Activated naive CD4-positive, alpha-beta T cell treated with anti-CD3 and anti-CD28 coated beads, Interleukin-2, amount 10 ng/mL, durations not matched to agents 7 days and 5 days (primary cell): ENCODE measurements at regions of chr16 and their contacts with region 1.

Region 1: DNA sequence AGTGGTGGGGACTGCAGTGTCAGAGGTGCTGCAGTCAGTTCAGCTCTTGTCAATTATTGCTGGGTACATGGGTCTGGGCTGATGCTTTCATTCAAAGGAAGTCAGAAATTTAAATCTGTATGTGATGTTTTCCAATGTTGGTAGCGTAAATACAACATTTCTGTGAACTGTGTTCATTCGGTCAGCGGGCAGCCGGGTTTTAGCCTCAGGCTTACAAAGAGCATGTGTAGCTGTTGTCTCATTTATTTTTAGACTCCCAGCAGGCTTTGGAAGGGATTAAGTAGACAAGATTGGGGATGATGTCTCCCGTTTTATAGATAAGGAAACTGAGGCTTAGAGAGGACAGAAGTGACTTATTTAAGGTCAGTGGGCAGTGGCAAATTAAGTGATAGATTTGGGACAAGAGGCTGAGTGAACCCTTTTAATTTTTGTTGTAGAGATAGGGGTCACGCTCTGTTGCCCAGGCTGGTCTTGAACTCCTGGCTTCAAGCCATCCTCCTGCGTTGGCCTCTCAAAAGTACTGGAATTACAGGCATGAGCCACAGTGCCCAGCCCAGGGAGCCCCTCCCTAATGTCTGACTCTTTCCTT is 8.1 kb downstream of the AQP8 start:
- DNase-seq: no peak
- H3K4me3 Mint-ChIP-seq: no peak overlapping the region
- H3K27ac Mint-ChIP-seq: no peak overlapping the region
- H3K4me1 Mint-ChIP-seq: no peaks in the 10 kb centered on the region
- H3K27me3 Mint-ChIP-seq: no peaks in the 10 kb centered on the region

Region 2: GRCh38 chr16:24906199-24907020 is 318.4 kb before region 1 on chr16:
- CTCF ChIA-PET with region 1: interaction called, 12 read pairs
- DNase-seq: no peak
- H3K4me3 Mint-ChIP-seq: no peak overlapping the region
- H3K27ac Mint-ChIP-seq: no peak overlapping the region
- H3K4me1 Mint-ChIP-seq: no peaks in the 10 kb centered on the region
- H3K27me3 Mint-ChIP-seq: no peaks in the 10 kb centered on the region

Region 3: DNA sequence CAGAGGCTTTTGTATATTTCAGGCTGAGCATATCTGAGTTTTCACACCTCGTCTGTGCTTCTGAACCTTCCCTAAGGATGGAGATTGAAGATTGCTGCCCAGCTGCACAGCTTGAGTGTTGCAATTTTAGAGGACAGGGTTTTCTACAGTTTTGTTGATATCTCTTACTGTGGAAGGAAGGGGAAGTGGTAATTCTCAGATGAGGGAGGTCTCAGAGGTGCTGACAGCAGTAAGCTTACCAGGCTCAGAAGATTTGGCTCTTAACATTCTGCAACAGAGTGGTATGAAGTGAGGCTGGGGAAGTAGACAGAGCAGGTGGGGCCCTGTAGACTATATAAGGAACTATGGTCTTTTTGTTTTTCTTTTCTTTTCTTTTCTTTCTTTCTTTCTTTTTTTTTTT is 163.9 kb before region 1 on chr16:
- CTCF ChIA-PET with region 1: interaction called, 41 read pairs
- DNase-seq: peak; percentile 51
- H3K4me3 Mint-ChIP-seq: peak overlapping the region; percentile 3
- H3K27ac Mint-ChIP-seq: peak overlapping the region; percentile 91
- H3K4me1 Mint-ChIP-seq: peaks cover 64% of the 10 kb centered on the region
- H3K27me3 Mint-ChIP-seq: no peaks in the 10 kb centered on the region

Region 4: GRCh38 chr16:25126820-25127232 is 98.0 kb before region 1 on chr16:
- CTCF ChIA-PET with region 1: interaction called, 34 read pairs
- DNase-seq: peak; percentile 46
- H3K4me3 Mint-ChIP-seq: no peak overlapping the region
- H3K27ac Mint-ChIP-seq: no peak overlapping the region
- H3K4me1 Mint-ChIP-seq: peaks cover 29% of the 10 kb centered on the region
- H3K27me3 Mint-ChIP-seq: no peaks in the 10 kb centered on the region

Region 5: DNA sequence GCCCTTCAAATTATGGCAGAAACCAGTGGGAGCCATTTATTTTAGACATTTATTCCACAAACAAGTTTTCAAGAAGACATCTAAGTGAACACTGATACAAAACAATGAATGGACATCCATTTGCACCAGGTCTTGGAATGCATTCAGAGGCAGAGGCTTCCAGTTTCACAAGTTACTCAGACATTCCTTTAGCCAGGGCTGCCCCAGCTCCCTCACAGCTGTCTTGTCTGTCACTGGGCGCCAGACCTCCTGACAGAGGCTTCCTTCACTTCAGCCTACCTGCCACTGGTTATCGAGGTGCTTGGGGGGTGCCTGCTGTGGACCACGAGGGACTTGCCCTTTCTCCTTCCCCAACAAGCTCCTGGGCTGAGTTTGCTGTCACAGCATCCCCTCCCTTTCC is 11.2 kb after region 1 on chr16:
- CTCF ChIA-PET with region 1: interaction called, 12 read pairs
- DNase-seq: no peak
- H3K4me3 Mint-ChIP-seq: no peak overlapping the region
- H3K27ac Mint-ChIP-seq: no peak overlapping the region
- H3K4me1 Mint-ChIP-seq: no peaks in the 10 kb centered on the region
- H3K27me3 Mint-ChIP-seq: no peaks in the 10 kb centered on the region